Calu3 (cell line): ENCODE measurements at regions of chr16 and their contacts with region 1.

Region 1: GRCh38 chr16:86590501-86591144 is 12.3 kb downstream of the FOXL1 start:
- DNase-seq: peak; percentile 39
- H3K4me3 Mint-ChIP-seq: no peak overlapping the region
- H3K27ac Mint-ChIP-seq: peak overlapping the region; percentile 12
- H3K4me1 Mint-ChIP-seq: peaks cover 13% of the 10 kb centered on the region
- H3K27me3 Mint-ChIP-seq: peaks cover 9% of the 10 kb centered on the region
- CTCF ChIP-seq: no peak

Region 2: GRCh38 chr16:85541980-85542900 is 1048.4 kb before region 1 on chr16:
- CTCF ChIA-PET with region 1: no interaction called
- intact Hi-C with region 1: no loop called
- DNase-seq: no peak
- H3K4me3 Mint-ChIP-seq: no peak overlapping the region
- H3K27ac Mint-ChIP-seq: no peak overlapping the region
- H3K4me1 Mint-ChIP-seq: no peaks in the 10 kb centered on the region
- H3K27me3 Mint-ChIP-seq: peaks cover 59% of the 10 kb centered on the region
- CTCF ChIP-seq: no peak

Region 3: DNA sequence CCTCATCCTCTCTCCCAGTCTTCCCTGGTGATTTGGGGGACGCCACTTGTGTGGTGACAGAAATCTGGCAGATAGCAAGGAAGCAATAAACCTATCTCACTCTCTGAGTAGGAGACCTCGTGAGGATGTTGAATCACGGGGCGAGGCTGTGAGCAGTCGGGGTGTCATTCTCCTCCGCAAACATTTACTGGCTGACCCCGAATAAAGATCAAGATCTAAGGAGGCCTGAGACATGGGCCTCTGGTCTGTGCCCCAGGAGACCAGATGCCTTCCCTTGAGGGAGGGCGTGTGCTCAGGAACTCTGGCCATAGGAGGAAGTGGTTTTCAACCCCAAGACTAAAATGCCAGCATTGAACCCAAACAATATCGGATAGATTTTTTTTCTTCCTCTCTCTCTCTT is 40.8 kb after region 1 on chr16:
- CTCF ChIA-PET with region 1: no interaction called
- intact Hi-C with region 1: loop called (anchors 2 kb)
- DNase-seq: peak; percentile 63
- H3K4me3 Mint-ChIP-seq: no peak overlapping the region
- H3K27ac Mint-ChIP-seq: peak overlapping the region; percentile 56
- H3K4me1 Mint-ChIP-seq: peaks cover 33% of the 10 kb centered on the region
- H3K27me3 Mint-ChIP-seq: no peaks in the 10 kb centered on the region
- CTCF ChIP-seq: no peak

Region 4: DNA sequence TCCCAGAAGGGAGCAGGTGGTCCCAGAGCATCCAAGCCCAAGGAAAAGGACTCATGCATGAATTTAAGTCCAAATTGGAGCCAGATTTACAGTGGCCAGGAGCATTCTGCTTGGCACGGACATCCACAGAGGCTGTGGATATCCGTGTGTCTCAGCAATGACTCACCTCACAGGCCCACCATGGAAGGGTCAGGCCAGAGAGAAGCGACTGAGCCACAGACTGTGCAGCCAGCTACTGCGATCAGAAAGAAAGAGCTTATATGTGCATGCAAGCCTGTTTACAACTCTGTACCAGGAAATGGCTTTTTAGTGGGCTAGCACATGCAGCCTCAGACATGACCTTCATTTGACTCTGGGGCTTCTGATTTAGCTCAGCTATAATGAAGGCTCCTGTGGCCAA is 495.5 kb after region 1 on chr16:
- CTCF ChIA-PET with region 1: no interaction called
- intact Hi-C with region 1: no loop called
- DNase-seq: no peak
- H3K4me3 Mint-ChIP-seq: no peak overlapping the region
- H3K27ac Mint-ChIP-seq: no peak overlapping the region
- H3K4me1 Mint-ChIP-seq: no peaks in the 10 kb centered on the region
- H3K27me3 Mint-ChIP-seq: peaks cover 74% of the 10 kb centered on the region
- CTCF ChIP-seq: no peak